Astrocyte of the cerebellum (primary cell): ENCODE measurements at regions of chr10 and their contacts with region 1.

Region 1: GRCh38 chr10:59606551-59606961 is 103.1 kb downstream of the SLC16A9 start:
- DNase-seq: no peak
- H3K4me3 ChIP-seq: no peak overlapping the region
- CTCF ChIP-seq: no peak

Region 2: DNA sequence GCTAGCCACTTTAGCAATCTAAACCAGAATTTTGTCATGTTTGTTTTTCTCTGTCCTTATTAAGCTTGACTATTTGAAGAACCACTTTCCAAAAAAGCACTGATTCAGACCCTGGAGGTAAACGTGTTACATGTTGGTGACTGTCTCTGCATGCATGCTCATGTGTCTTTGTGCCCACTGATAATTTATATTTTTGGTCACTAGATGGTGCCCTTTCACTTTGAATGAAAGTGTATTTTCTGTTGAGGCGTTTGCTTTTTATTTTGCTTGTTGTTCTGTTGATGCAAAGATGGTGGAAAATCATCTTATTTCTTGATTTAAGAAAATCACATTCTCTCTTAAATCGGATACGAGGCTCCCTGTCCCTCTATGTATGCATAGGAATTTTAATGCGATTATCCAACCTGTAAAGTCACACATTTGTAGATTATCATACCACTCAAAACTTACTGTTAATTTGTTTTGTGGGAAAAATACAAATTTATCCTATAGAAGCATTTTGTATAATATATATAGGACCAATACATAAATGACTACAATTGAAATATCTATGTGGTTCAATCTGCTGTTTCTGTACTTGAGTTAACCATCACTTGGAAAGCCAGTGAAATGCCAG is 824.6 kb before region 1 on chr10:
- in situ Hi-C with region 1: loop called (anchors 25 kb)
- DNase-seq: peak; percentile 27
- H3K4me3 ChIP-seq: no peak overlapping the region
- CTCF ChIP-seq: peak; percentile 54

Region 3: DNA sequence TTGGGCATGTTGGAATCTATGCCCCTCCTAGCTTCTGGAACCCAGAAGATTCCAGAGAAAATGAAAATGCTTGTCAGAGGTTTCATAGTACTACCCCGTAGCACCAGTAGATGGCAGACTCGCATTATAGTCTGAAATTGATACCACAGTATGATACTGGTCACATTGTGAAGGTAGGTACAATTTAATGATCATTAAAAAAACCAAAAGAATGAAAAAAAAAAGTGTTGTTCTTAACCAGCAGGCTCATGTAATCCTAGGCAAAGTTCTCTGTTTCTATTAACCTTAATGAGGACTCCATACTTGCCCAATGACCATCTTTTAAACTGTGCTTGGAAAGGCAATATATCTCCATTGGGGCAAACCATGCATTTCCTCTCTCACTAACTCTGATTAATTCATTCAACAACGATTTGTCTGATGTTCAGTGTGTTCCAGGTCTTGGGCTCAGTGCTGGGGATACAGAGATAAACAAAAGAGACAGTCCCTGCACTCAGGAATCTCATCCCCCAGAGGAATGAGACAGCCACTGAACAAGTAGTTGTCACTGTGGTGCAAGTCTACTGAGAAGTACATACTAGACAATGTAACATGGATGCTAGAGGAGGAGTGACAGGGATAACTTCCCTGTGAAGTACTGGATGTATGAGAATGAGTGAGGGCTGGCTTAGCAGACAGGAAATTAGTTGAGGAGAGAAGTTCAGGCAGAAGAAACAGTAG is 653.6 kb before region 1 on chr10:
- in situ Hi-C with region 1: loop called (anchors 25 kb)
- DNase-seq: peak; percentile 44
- H3K4me3 ChIP-seq: no peak overlapping the region
- CTCF ChIP-seq: peak; percentile 75